Naive thymus-derived CD8-positive, alpha-beta T cell (primary cell): ENCODE measurements at regions of chr14 and their contacts with region 1.

Region 1: GRCh38 chr14:61403411-61403810 is 82.0 kb downstream of the PRKCH start:
- DNase-seq: peak in 6 of 10 donors; percentile 29 to 76 (median 61)
- ATAC-seq: peak; percentile 75 to 82
- H3K4me3 Mint-ChIP-seq: peak overlapping the region; percentile 49 to 84 (median 68)
- H3K27ac Mint-ChIP-seq: peak overlapping the region; percentile 75 to 96 (median 94)
- H3K4me1 Mint-ChIP-seq: peaks cover 40 to 83% (median 59%) of the 10 kb centered on the region in 4 donors
- H3K27me3 Mint-ChIP-seq: no peaks in the 10 kb centered on the region

Region 2: GRCh38 chr14:61379639-61380184 is 23.7 kb before region 1 on chr14:
- POLR2A ChIA-PET with region 1: interaction called, 15 read pairs
- DNase-seq: no peak
- ATAC-seq: peak; percentile 25 to 38
- H3K4me3 Mint-ChIP-seq: peak overlapping the region in 8 of 10 donors; percentile 56 to 82 (median 70)
- H3K27ac Mint-ChIP-seq: peak overlapping the region in 6 of 10 donors; percentile 85 to 93 (median 90)
- H3K4me1 Mint-ChIP-seq: peaks cover 0 to 54% (median 8%) of the 10 kb centered on the region in 4 donors
- H3K27me3 Mint-ChIP-seq: no peaks in the 10 kb centered on the region

Region 3: GRCh38 chr14:61388173-61388975 is 15.0 kb before region 1 on chr14:
- POLR2A ChIA-PET with region 1: interaction called, 19 read pairs
- DNase-seq: peak in 4 of 10 donors; percentile 29 to 54 (median 50)
- ATAC-seq: peak; percentile 51 to 68
- H3K4me3 Mint-ChIP-seq: peak overlapping the region in 2 of 10 donors; percentile 54 to 86
- H3K27ac Mint-ChIP-seq: no peak overlapping the region
- H3K4me1 Mint-ChIP-seq: peaks cover 0 to 17% (median 7%) of the 10 kb centered on the region in 4 donors
- H3K27me3 Mint-ChIP-seq: no peaks in the 10 kb centered on the region

Region 4: GRCh38 chr14:61503167-61503801 is 99.9 kb after region 1 on chr14:
- POLR2A ChIA-PET with region 1: no interaction called
- DNase-seq: peak in 9 of 10 donors; percentile 38 to 83 (median 70)
- ATAC-seq: peak; percentile 85 to 90
- H3K4me3 Mint-ChIP-seq: peak overlapping the region; percentile 62 to 84 (median 78)
- H3K27ac Mint-ChIP-seq: peak overlapping the region in 9 of 10 donors; percentile 92 to 98 (median 97)
- H3K4me1 Mint-ChIP-seq: peaks cover 48 to 100% (median 96%) of the 10 kb centered on the region in 4 donors
- H3K27me3 Mint-ChIP-seq: no peaks in the 10 kb centered on the region